SK-N-SH (cell line): ENCODE measurements at regions of chr12 and their contacts with region 1.

Region 1: DNA sequence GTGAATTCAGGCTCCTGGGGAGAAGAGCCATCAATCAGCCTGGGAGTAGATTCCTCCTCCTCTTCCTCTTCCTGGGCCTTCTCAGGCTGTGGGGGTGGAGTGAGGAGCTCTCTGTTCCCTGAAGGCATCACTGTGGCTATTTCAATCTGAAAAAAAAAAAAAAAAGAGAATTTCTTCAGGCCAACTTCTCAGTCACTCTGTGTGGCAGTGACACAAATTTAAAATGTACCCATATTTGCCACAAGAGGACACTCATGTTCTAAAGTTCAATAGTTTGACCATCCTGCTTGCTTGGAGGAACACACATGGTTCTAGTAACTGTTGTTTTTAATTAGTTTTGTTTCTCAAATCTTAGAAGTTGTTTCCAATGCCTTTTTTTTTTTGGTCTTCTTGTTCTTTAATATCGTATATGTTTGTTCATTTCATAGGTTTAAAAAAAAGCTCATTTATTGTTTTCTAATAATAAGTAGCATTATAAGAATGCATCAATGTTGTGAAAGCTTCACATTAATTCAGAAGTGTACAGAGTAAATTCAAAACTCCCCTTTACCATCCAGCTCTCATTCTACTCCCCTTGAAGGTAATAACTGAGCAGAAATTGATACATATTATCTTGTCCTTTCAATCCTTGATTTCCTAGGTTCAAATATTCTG is 23.3 kb upstream of the CCER1 start:
- DNase-seq: peak; percentile 32
- H3K4me3 ChIP-seq: no peak overlapping the region; a peak in 1 of 4 replicates
- H3K27ac ChIP-seq: no peak overlapping the region
- H3K4me1 ChIP-seq: peaks cover 2 to 9% of the 10 kb centered on the region in 2 experiments; a peak in 3 of 4 replicates
- H3K27me3 ChIP-seq: no peaks in the 10 kb centered on the region
- CTCF ChIP-seq: peak; percentile 91
- EP300 ChIP-seq: no peak
- RAD21 ChIP-seq: peak; percentile 98

Region 2: DNA sequence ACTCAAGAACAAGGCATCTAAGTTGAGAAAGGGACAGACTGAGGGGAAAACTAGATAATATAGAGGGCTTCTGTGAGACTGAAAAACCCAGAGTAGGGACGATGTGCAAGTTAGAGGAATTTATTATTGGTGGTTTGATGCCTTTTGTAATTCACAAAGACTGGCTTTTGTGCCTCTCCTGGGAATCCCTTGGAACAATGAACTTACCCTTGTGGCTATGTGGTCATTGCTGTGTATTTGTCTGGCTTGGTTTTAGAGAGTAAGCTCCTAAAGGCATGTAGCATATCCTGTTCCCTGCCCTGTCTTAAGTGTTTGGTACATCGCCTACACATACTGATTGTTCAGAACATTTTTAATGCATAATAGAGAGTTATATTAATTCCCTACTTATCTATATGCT is 177.7 kb after region 1 on chr12:
- CTCF ChIA-PET with region 1: no interaction called
- POLR2A ChIA-PET with region 1: no interaction called
- DNase-seq: no peak
- H3K4me3 ChIP-seq: no peak overlapping the region
- H3K27ac ChIP-seq: no peak overlapping the region
- H3K4me1 ChIP-seq: no peaks in the 10 kb centered on the region; a peak in 1 of 4 replicates
- H3K27me3 ChIP-seq: no peaks in the 10 kb centered on the region
- CTCF ChIP-seq: no peak
- EP300 ChIP-seq: no peak
- RAD21 ChIP-seq: no peak

Region 3: GRCh38 chr12:91172096-91172495 is 193.9 kb after region 1 on chr12:
- CTCF ChIA-PET with region 1: interaction called, 15 read pairs
- POLR2A ChIA-PET with region 1: no interaction called
- DNase-seq: no peak
- H3K4me3 ChIP-seq: no peak overlapping the region
- H3K27ac ChIP-seq: peak overlapping the region in 1 of 2 experiments; percentile 61; a peak in 1 of 4 replicates
- H3K4me1 ChIP-seq: peaks cover 0 to 6% of the 10 kb centered on the region in 2 experiments; a peak in 2 of 4 replicates
- H3K27me3 ChIP-seq: no peaks in the 10 kb centered on the region
- CTCF ChIP-seq: no peak
- EP300 ChIP-seq: no peak
- RAD21 ChIP-seq: no peak

Region 4: DNA sequence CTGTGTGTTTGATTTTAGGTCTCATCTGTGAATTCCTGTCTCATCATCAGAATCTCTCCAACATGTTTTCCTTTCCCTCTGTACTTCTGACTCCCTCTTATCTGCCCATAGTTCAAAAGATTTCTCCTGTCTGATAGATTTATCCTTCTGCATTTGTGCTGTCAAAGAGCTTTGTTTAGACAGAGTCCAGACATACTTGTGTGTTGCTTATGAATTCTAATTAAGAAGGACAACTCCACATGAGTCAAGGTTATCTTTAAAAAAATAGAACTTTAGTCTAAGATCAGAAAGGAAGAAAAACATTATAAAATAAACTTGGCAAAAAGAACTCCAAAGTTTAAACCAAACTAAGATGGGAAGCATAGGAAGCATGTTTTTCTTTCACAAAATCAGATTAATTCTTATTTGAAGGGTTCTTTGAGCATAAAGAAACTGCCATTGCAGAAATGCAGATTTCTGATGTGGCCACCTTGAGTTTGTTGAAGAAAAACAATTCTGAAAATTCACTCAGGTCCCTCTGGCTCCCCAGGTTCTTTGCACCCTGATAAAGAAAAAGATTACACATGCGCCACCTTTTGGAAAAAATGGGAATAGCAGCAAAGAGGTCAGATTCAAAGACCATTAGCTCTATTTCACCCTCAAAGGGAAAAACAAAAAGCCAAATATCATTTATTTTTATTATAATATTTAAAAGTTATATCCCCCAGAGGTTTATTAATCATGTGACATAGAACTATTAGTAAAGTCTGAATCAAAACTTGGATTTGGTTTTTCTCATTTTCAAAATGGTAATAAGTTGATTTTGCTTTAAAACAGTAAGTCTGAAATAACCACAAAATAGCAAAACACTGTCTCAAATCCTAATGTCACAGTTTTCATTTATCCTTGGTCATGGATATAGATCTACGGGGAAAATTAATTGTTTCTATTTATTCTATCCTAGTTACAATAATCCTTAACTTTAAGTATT is 348.1 kb after region 1 on chr12:
- CTCF ChIA-PET with region 1: interaction called, 46 read pairs
- POLR2A ChIA-PET with region 1: no interaction called
- DNase-seq: peak; percentile 26
- H3K4me3 ChIP-seq: peak overlapping the region in 1 of 2 experiments; percentile 45; a peak in 1 of 4 replicates
- H3K27ac ChIP-seq: peak overlapping the region; percentile 70 to 91; a peak in 3 of 4 replicates
- H3K4me1 ChIP-seq: no peaks in the 10 kb centered on the region; a peak in 1 of 4 replicates
- H3K27me3 ChIP-seq: no peaks in the 10 kb centered on the region
- CTCF ChIP-seq: peak; percentile 86
- EP300 ChIP-seq: peak; percentile 71 to 76; a peak in 3 of 4 replicates
- RAD21 ChIP-seq: peak; percentile 80

Region 5: GRCh38 chr12:91332302-91332701 is 354.1 kb after region 1 on chr12:
- CTCF ChIA-PET with region 1: interaction called, 46 read pairs
- POLR2A ChIA-PET with region 1: no interaction called
- DNase-seq: no peak
- H3K4me3 ChIP-seq: no peak overlapping the region
- H3K27ac ChIP-seq: no peak overlapping the region
- H3K4me1 ChIP-seq: no peaks in the 10 kb centered on the region; a peak in 1 of 4 replicates
- H3K27me3 ChIP-seq: no peaks in the 10 kb centered on the region
- CTCF ChIP-seq: peak; percentile 43
- EP300 ChIP-seq: no peak
- RAD21 ChIP-seq: peak; percentile 59

Region 6: GRCh38 chr12:91349476-91349875 is 371.2 kb after region 1 on chr12:
- CTCF ChIA-PET with region 1: interaction called, 61 read pairs
- POLR2A ChIA-PET with region 1: no interaction called
- DNase-seq: no peak
- H3K4me3 ChIP-seq: no peak overlapping the region
- H3K27ac ChIP-seq: no peak overlapping the region; a peak in 1 of 4 replicates
- H3K4me1 ChIP-seq: no peaks in the 10 kb centered on the region
- H3K27me3 ChIP-seq: no peaks in the 10 kb centered on the region
- CTCF ChIP-seq: no peak
- EP300 ChIP-seq: no peak
- RAD21 ChIP-seq: no peak